H1 (cell line): ENCODE measurements at regions of chr1 and their contacts with region 1.

Region 1: DNA sequence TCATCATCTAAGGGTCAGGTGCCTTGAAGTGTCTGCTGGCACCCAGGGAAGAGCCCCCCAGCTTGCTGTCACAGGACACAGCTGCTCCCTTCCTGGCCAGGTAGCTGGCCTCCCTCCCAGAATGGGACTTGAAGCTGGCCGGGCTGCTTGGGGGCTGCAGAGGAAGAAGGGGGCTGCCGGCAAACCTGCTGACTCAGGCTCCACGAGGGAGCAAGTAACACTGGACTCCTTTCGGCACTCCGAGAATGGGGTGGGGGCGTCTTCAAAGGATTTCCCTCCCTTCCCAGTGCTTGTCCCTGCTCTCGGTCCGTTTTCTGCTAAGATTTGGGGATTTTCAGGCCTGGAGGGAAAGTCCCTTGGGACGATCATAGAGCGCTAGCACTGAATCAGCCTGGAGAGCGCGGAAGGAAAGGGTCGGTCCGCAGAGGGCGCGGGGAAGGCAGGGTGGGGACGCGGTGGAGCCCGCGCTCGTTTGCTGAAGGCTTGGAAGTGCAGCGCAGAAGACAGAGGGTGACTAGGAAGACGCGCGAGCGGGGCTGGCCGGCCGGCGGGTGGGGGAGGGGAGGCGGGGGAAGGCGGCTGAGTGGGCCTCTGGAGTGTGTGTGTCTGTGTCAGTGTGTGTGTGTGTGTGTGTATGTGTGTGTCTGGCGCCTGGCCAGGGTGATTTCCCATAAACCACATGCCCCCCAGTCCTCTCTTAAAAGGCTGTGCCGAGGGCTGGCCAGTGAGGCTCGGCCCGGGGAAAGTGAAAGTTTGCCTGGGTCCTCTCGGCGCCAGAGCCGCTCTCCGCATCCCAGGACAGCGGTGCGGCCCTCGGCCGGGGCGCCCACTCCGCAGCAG is at the start of gene CSF1:
- DNase-seq: peak in 1 of 2 experiments; percentile 62
- H3K4me3 ChIP-seq: peak within 1 kb of the TSS; percentile 47 to 69 (median 56)
- H3K27ac ChIP-seq: no peak within 1 kb of the TSS
- H3K4me1 ChIP-seq: peaks cover 2 to 25% (median 13%) of the 10 kb centered on the region in 4 experiments
- H3K27me3 ChIP-seq: peaks cover 7 to 47% (median 34%) of the 10 kb centered on the region in 4 experiments
- CTCF ChIP-seq: no peak
- EP300 ChIP-seq: no peak
- POLR2A ChIP-seq: no peak; a peak in 1 of 3 replicates
- RAD21 ChIP-seq: 0 out of 4 replicates have a peak, but pooled peaks of 1 of the 2 experiments have one; percentile 5
- total RNA-seq, gene CSF1: 2.0 and 3.3 TPM in 2 replicates

Region 2: DNA sequence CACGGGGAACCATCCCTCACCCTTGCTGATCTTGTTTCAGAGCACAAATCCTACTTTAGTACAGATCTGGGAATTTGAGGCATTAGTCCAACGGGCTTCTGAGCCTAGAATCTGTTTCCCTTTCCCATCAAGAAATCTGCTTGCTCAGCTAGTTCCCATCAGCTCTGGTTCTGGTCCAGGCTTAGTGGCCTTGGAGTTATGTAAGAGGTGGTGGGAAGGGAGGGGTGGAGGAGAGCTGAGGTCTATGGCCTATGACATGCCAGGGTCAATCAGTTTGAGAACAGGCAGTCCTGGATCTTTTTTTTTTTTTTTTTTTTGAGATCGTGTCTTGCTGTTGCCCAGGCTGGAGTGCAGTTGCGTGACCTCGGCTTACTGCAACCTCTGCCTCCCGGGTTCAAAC is 218.6 kb before region 1 on chr1:
- CTCF ChIA-PET with region 1: no interaction called
- POLR2A ChIA-PET with region 1: no interaction called
- DNase-seq: no peak
- H3K4me3 ChIP-seq: no peak overlapping the region
- H3K27ac ChIP-seq: no peak overlapping the region
- H3K4me1 ChIP-seq: peaks cover 0 to 5% (median 3%) of the 10 kb centered on the region in 4 experiments; a peak in 3 of 7 replicates
- H3K27me3 ChIP-seq: no peaks in the 10 kb centered on the region
- CTCF ChIP-seq: no peak
- EP300 ChIP-seq: no peak
- POLR2A ChIP-seq: no peak
- RAD21 ChIP-seq: no peak

Region 3: GRCh38 chr1:109931189-109931731 is 20.9 kb after region 1 on chr1:
- CTCF ChIA-PET with region 1: interaction called, 94 read pairs
- POLR2A ChIA-PET with region 1: no interaction called
- DNase-seq: peak; percentile 60 to 89
- H3K4me3 ChIP-seq: no peak overlapping the region
- H3K27ac ChIP-seq: peak overlapping the region; percentile 59; the same call in 1 of the 2 replicates
- H3K4me1 ChIP-seq: peaks cover 4 to 9% (median 5%) of the 10 kb centered on the region in 4 experiments; a peak in 6 of 7 replicates
- H3K27me3 ChIP-seq: no peaks in the 10 kb centered on the region
- CTCF ChIP-seq: no peak
- EP300 ChIP-seq: peak; percentile 67 to 79; a peak in 2 of 3 replicates
- POLR2A ChIP-seq: peak in 1 of 2 experiments; percentile 49; a peak in 1 of 3 replicates
- RAD21 ChIP-seq: peak; percentile 30 to 47; a peak in 3 of 4 replicates